Right cardiac atrium (tissue), 5 donors: ENCODE measurements at regions of chr2 and their contacts with region 1.

Region 1: GRCh38 chr2:97645695-97646629 is at the start of gene COX5B:
- DNase-seq: peak; percentile 99 to 100 (median 99)
- ATAC-seq: peak; percentile 99
- H3K4me3 ChIP-seq: peak within 1 kb of the TSS; percentile 68
- H3K27ac ChIP-seq: peak within 1 kb of the TSS; percentile 88
- H3K4me1 ChIP-seq: peaks cover 3% of the 10 kb centered on the region
- H3K27me3 ChIP-seq: no peaks in the 10 kb centered on the region
- total RNA-seq, gene COX5B: 893 to 1,145 (median 1,032) TPM

Region 2: DNA sequence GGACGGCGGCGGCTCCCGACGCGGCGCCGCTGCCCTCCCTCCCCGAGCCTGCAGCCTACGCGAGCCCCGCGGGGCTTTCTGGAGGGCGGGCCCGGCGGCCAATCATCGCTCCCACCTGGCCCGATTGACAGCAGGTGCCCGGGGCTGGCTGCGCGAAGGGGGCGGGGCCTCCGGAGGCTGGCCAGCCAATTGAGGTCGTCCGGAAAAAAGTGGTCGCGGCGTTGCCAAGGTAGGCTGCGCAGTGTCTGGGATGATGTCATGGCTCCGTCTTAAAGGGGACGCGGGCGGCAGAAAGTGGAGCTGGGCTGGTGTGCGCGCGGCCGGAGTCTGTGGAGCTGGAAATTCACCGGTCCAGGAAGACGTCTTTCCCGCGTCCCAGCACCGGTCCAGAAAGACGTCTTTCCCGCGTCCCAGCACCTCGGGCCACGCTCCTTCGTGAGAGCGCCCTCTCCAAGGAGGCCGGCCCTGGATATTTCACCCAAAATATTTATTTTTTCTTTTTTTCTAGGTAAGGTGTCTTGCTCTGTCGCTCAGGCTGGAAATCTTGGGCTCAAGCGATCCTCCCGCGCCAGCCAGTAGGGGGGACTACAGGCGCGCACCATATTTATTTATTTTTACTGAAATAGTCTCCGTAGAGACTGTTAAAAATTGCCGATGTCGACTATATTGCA is 18.1 kb after region 1 on chr2 and contains the start of gene ACTR1B:
- intact Hi-C with region 1: loop called in 2 of 4 experiments (anchors 2 kb)
- DNase-seq: peak; percentile 97 to 99 (median 99)
- ATAC-seq: peak; percentile 96
- H3K4me3 ChIP-seq: peak within 1 kb of the TSS; percentile 90
- H3K27ac ChIP-seq: peak within 1 kb of the TSS; percentile 97
- H3K4me1 ChIP-seq: peaks cover 3% of the 10 kb centered on the region
- H3K27me3 ChIP-seq: no peaks in the 10 kb centered on the region
- total RNA-seq, gene ACTR1B: 60.0 to 71.5 (median 65.7) TPM

Region 3: DNA sequence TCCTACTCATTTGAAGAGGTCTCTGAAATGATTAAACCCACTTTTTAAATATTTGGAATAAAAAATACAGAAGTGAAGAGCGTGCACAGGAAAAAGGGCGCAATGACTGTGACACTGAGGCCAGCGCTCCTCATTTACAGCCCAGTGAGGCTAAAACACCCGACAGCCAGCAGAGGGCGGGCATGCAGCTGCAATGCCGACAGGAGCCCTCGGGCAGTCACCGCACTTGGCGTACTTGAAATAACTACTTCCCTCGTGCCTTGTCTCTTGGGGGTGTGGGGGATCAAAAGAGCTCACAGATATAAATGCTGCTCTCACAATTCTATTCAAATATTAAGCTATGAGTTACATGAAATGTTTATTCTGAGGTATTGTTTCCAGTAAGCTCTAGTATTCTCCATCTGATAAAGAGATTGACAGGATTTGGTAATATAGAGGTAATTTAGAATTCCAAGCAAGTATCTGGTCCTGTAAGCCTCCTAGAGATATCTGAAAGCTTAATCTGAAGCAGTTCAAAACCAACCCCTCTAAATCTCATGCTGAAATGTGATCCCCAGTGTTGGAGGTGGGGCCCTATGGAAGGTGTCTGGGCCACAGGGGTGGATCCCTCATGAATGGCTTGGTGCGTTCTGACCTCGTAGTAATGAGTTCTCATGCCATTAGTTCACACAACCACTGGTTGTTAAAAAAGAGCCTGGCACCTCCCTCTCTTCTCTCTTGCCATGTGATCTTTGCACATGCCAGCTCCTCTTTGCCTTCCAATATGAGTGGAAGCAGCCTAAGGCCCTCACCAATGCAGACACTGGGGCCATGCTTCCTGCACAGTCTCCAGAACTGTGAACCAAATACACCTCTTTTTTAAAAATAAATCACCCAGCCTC is 161.0 kb after region 1 on chr2:
- intact Hi-C with region 1: no loop called
- DNase-seq: peak; percentile 86 to 94 (median 92)
- ATAC-seq: peak; percentile 95 to 98
- H3K4me3 ChIP-seq: no peak overlapping the region
- H3K27ac ChIP-seq: no peak overlapping the region
- H3K4me1 ChIP-seq: no peaks in the 10 kb centered on the region
- H3K27me3 ChIP-seq: no peaks in the 10 kb centered on the region

Region 4: GRCh38 chr2:97849881-97850528 is 204.0 kb after region 1 on chr2:
- intact Hi-C with region 1: no loop called
- DNase-seq: no peak
- ATAC-seq: no peak
- H3K4me3 ChIP-seq: no peak overlapping the region
- H3K27ac ChIP-seq: no peak overlapping the region
- H3K4me1 ChIP-seq: peaks cover 1% of the 10 kb centered on the region
- H3K27me3 ChIP-seq: no peaks in the 10 kb centered on the region